ENCODE measurements at regions of chr5 and their contacts with region 1.

Region 1: DNA sequence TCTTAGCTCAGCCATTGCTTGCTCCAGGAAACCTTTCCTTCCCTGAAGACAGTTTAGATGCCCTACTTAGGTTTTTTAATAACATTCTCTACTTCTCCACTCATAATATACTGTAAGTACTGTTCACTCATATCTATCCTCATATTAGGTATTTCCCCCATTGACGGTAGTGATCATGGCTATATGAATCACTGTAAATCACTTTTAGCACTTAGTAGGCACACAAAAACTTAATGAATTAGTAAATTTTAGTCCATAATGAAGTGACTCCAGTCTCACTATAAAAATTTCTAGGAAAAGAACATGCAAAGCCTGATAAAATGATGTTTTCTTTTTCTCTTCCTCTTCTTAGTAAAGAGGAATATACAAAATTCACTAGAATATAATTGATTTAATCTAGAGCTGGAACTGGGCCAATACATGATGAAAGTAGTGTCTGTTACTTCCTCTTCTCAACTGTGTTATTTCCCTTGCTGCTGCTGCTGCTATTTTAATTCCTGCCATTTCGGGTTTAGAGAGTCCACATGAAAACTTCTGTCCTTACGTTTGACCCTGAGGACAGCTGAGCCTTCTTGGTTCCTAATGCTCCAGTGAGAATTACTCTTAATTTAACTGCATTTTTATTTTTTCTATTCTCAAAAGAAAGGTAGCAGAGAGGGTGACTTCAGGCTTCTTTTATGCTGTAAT is 73.5 kb downstream of the LNPEP start:
- DNase-seq: no peak

Region 2: GRCh38 chr5:96763026-96763425 is 246.3 kb before region 1 on chr5:
- intact Hi-C with region 1: no loop called
- DNase-seq: no peak

Region 3: DNA sequence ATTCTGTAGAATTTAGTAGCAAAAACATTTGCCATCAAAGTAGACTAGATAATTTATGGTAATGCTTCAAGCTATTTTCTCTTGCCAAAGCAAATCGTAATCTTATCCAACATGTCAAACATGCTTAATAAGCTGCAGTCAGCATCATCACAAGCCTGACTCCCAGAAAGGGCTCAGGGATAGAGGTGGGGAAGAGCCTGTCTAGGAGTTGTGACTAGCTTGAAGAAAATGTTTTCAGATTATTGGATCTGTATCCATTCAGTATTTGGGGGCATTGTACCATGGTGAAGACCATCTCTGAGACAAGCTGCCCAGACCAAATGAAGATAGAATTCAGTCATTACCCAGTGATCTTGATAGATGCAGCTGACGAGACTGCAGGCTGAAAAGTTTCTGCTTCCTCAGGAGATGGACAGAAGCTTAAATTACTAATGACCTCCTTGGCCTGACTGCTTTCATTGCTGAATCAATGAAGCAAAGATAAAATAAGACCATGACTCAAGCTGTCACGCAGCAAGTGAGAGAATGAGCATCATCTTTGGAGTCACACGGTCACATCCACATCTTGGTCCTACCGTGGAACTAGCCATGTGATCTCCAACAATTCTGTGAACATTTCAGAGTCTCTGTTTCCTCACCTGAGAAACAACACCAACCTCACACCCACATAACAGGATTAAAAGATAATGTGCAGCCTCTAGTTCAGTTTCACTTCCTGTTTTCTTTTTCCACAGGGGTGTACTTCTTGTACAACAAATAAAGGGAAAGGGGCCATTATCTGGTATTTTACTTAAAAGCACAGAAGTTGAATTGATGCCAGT is 123.6 kb before region 1 on chr5:
- intact Hi-C with region 1: no loop called
- DNase-seq: no peak

Region 4: GRCh38 chr5:97142521-97143254 is 133.3 kb after region 1 on chr5 and contains the start of gene LIX1:
- intact Hi-C with region 1: loop called (anchors 10 kb)
- DNase-seq: no peak
- total RNA-seq, gene LIX1: not detected